GM10248 (cell line): ENCODE measurements at regions of chr21 and their contacts with region 1.

Region 1: GRCh38 chr21:26715878-26716506 is 129.2 kb downstream of the ADAMTS1 start:
- DNase-seq: peak; percentile 20
- CTCF ChIP-seq: peak; percentile 70

Region 2: GRCh38 chr21:25881525-25882376 is 834.2 kb before region 1 on chr21:
- CTCF ChIA-PET with region 1: interaction called, 19 read pairs
- POLR2A ChIA-PET with region 1: no interaction called
- DNase-seq: peak; percentile 75
- CTCF ChIP-seq: peak; percentile 92

Region 3: GRCh38 chr21:26788790-26789189 is 72.8 kb after region 1 on chr21:
- CTCF ChIA-PET with region 1: no interaction called
- POLR2A ChIA-PET with region 1: no interaction called
- DNase-seq: no peak
- CTCF ChIP-seq: no peak